Right cardiac atrium (tissue), 5 donors: ENCODE measurements at regions of chr20 and their contacts with region 1.

Region 1: DNA sequence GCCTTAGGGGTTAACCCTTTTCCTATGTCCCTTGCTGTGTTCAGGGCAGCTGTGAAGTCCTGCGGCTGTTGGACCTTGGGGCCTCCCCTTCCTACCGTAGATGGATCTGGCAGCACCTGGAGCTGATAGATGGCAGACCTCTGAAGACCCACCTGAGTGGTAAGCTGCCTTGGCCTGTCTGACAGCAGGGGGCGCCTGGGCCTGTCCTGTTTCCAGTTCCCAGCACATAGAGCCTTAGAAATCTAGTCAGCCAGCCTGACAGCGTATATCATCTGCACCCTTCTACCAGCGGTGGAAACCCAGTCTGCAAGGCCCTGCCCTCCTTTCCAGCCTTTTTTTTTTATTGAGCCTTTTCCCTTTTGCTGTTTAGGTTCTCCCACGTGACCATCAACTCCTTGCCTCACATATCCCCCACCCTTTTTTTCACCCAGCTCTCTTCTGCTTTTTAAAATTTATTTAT is 26.6 kb downstream of the CNBD2 start:
- DNase-seq: peak; percentile 83 to 94 (median 92)
- ATAC-seq: peak; percentile 95 to 96
- H3K4me3 ChIP-seq: no peak overlapping the region
- H3K27ac ChIP-seq: no peak overlapping the region
- H3K4me1 ChIP-seq: no peaks in the 10 kb centered on the region
- H3K27me3 ChIP-seq: no peaks in the 10 kb centered on the region

Region 2: GRCh38 chr20:35575970-35576623 is 418.9 kb before region 1 on chr20:
- intact Hi-C with region 1: no loop called
- DNase-seq: no peak
- ATAC-seq: no peak
- H3K4me3 ChIP-seq: no peak overlapping the region
- H3K27ac ChIP-seq: no peak overlapping the region
- H3K4me1 ChIP-seq: no peaks in the 10 kb centered on the region
- H3K27me3 ChIP-seq: no peaks in the 10 kb centered on the region

Region 3: DNA sequence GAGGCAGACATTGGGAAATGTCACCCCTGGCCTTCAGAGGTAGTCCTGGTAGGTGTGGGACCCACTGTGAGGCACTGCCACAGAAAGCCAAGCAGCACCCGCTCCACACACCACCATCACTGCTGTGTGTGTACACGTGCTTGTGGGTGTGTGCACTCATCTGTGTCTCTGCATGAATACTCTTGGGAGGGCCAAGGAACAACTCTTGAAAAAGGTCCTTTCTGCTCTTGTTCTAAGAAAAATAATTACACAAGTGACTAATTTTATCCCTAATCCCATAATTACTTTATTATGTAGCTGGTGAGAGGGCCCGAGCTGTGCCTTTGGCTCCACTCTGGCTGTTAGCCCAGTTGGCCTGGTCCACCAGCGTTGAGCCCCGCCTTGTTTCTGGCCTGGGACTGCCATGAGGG is 137.8 kb after region 1 on chr20:
- intact Hi-C with region 1: loop called (anchors 1 to 5 kb)
- DNase-seq: no peak
- ATAC-seq: no peak
- H3K4me3 ChIP-seq: no peak overlapping the region
- H3K27ac ChIP-seq: no peak overlapping the region
- H3K4me1 ChIP-seq: no peaks in the 10 kb centered on the region
- H3K27me3 ChIP-seq: no peaks in the 10 kb centered on the region

Region 4: GRCh38 chr20:36144336-36144735 is 149.3 kb after region 1 on chr20:
- intact Hi-C with region 1: loop called in 3 of 4 experiments (anchors 2 to 5 kb)
- DNase-seq: no peak
- ATAC-seq: no peak
- H3K4me3 ChIP-seq: no peak overlapping the region
- H3K27ac ChIP-seq: no peak overlapping the region
- H3K4me1 ChIP-seq: peaks cover 3% of the 10 kb centered on the region
- H3K27me3 ChIP-seq: no peaks in the 10 kb centered on the region

Region 5: DNA sequence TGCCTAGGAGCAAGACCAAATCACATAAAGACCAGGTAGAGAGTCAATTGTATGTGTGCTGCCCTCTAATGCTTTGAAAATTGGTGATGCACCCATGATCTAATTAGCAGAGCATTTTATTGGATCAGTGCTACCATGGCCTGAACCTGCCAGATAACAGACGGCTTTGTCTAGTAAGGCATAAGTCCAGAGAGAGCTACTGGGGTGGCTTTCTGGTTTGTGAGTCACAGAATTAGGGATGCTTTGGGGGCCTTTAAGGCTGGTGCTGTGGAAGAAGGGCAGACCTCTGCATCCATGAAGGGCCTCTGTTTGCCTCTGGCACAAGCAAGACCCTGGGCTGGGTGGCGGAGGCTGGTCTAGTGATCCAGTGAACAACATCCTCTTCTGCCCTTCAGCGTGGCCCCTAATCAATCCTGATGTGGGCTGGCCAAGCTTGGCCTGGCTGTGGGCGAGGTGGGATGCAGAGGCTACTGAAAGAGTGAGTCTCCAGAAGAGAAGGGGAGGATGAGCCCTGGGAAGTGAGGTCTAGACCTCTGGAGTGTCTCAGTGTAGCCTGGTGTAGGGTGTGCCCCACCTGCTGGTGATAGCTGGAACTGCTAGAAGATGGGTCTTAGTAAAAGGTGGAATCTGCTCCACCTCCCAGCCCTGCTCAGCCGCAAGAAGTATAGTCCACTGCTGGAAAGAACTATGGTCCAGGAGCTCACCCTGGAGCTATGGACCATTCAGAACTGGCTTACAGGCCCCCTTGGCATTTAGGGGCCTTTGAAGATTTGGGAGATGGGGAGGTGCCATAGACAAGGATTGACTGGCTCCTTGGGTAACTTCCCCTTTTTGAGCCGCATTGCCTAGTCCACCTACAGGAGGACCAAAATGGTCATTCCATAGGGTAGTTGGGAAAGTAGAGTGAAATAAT is 204.6 kb after region 1 on chr20:
- intact Hi-C with region 1: loop called in 1 of 4 experiments (anchors 5 kb)
- DNase-seq: peak; percentile 72 to 89 (median 79)
- ATAC-seq: peak; percentile 71
- H3K4me3 ChIP-seq: no peak overlapping the region
- H3K27ac ChIP-seq: no peak overlapping the region
- H3K4me1 ChIP-seq: no peaks in the 10 kb centered on the region
- H3K27me3 ChIP-seq: no peaks in the 10 kb centered on the region